ENCODE measurements at regions of chr7 and their contacts with region 1.

Region 1: GRCh38 chr7:147079921-147080420 is 963.4 kb downstream of the CNTNAP2 start:
- DNase-seq: no peak
- ATAC-seq: no peak
- H3K4me3 ChIP-seq: no peak overlapping the region
- H3K4me3 Mint-ChIP-seq: no peak overlapping the region
- H3K27ac ChIP-seq: no peak overlapping the region
- H3K27ac Mint-ChIP-seq: no peak overlapping the region
- H3K4me1 ChIP-seq: no peaks in the 10 kb centered on the region
- H3K4me1 Mint-ChIP-seq: no peaks in the 10 kb centered on the region
- H3K27me3 ChIP-seq: no peaks in the 10 kb centered on the region
- H3K27me3 Mint-ChIP-seq: no peaks in the 10 kb centered on the region
- CTCF ChIP-seq: no peak

Region 2: DNA sequence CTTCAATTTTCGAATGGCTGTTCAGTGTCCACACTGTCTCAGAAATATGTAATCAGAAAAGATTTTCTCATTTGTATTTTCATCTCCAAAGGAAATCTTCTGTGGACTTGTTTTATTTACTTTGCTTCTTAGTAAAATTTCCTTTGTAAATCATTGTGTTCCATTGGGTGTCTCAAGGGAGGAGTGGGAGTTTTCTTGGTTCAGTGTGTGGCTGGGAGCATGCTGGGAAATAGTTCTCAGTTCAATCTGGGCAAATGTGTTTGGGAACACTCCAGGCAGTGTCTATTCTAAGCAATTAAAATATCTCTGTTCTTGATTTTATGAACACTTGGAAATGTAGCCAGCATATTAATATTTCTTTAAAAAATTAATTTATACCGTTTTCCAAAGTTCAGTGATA is 56.4 kb after region 1 on chr7:
- intact Hi-C with region 1: loop called (anchors 10 kb)
- DNase-seq: no peak
- ATAC-seq: no peak
- H3K4me3 ChIP-seq: no peak overlapping the region
- H3K4me3 Mint-ChIP-seq: no peak overlapping the region
- H3K27ac ChIP-seq: no peak overlapping the region
- H3K27ac Mint-ChIP-seq: no peak overlapping the region
- H3K4me1 ChIP-seq: no peaks in the 10 kb centered on the region
- H3K4me1 Mint-ChIP-seq: no peaks in the 10 kb centered on the region
- H3K27me3 ChIP-seq: no peaks in the 10 kb centered on the region
- H3K27me3 Mint-ChIP-seq: no peaks in the 10 kb centered on the region
- CTCF ChIP-seq: no peak